ENCODE measurements at regions of chr1 and their contacts with region 1.

Region 1: GRCh38 chr1:11907275-11908094 is 18.7 kb downstream of the KIAA2013 start:
- DNase-seq: peak; percentile 80 to 96 (median 90)
- ATAC-seq: peak; percentile 45 to 77 (median 68)
- H3K4me3 ChIP-seq: peak overlapping the region in 1 of 2 donors; percentile 85
- H3K4me3 Mint-ChIP-seq: peak overlapping the region; percentile 89 to 96 (median 93)
- H3K27ac ChIP-seq: peak overlapping the region; percentile 97
- H3K27ac Mint-ChIP-seq: peak overlapping the region; percentile 100
- H3K4me1 ChIP-seq: peaks cover 6 to 35% of the 10 kb centered on the region in 2 experiments
- H3K4me1 Mint-ChIP-seq: peaks cover 26 to 57% (median 37%) of the 10 kb centered on the region in 3 donors
- H3K27me3 ChIP-seq: peaks cover 0 to 20% of the 10 kb centered on the region in 2 experiments
- H3K27me3 Mint-ChIP-seq: peaks cover 3 to 4% of the 10 kb centered on the region in 2 donors

Region 2: DNA sequence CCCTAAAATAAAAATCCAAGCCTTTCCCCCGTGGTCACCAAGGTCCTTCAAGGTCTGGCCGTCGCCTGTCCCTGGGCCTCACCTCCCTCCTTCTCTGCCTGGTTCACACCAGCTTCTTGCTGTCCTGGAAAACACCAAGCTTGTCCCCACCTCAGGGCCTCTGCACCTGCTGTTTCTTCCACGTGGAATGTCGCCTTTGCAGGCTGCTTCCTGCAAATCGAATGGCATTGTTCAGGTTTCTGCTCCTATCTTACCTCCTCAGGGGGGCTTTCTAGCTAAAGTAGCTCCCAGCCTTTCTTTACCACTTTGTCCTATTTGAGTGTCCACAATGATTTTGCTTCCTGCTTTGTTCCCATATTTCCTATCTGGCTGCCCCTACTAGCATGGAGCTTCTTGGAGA is 1107.8 kb before region 1 on chr1:
- CTCF ChIA-PET with region 1: no interaction called
- POLR2A ChIA-PET with region 1: interaction called in 1 of 2 experiments, 10 read pairs
- DNase-seq: no peak
- ATAC-seq: no peak
- H3K4me3 ChIP-seq: no peak overlapping the region
- H3K4me3 Mint-ChIP-seq: no peak overlapping the region
- H3K27ac ChIP-seq: no peak overlapping the region
- H3K27ac Mint-ChIP-seq: no peak overlapping the region
- H3K4me1 ChIP-seq: peaks cover 0 to 25% of the 10 kb centered on the region in 2 experiments
- H3K4me1 Mint-ChIP-seq: peaks cover 5 to 10% (median 7%) of the 10 kb centered on the region in 3 donors
- H3K27me3 ChIP-seq: peaks cover 4 to 64% of the 10 kb centered on the region in 2 experiments
- H3K27me3 Mint-ChIP-seq: peaks cover 50 to 53% of the 10 kb centered on the region in 2 donors

Region 3: GRCh38 chr1:11262171-11263049 is 645.1 kb before region 1 on chr1 and contains the start of gene MTOR:
- CTCF ChIA-PET with region 1: interaction called in 1 of 2 experiments, 10 read pairs
- POLR2A ChIA-PET with region 1: interaction called in 1 of 2 experiments, 3 read pairs
- DNase-seq: peak; percentile 90 to 99 (median 98)
- ATAC-seq: peak; percentile 97 to 99 (median 98)
- H3K4me3 ChIP-seq: peak within 1 kb of the TSS; percentile 88 to 95
- H3K4me3 Mint-ChIP-seq: peak within 1 kb of the TSS; percentile 86 to 95 (median 90)
- H3K27ac ChIP-seq: peak within 1 kb of the TSS; percentile 47
- H3K27ac Mint-ChIP-seq: peak within 1 kb of the TSS; percentile 88 to 91
- H3K4me1 ChIP-seq: peaks cover 8 to 24% of the 10 kb centered on the region in 2 experiments
- H3K4me1 Mint-ChIP-seq: peaks cover 14 to 28% (median 20%) of the 10 kb centered on the region in 3 donors
- H3K27me3 ChIP-seq: no peaks in the 10 kb centered on the region
- H3K27me3 Mint-ChIP-seq: no peaks in the 10 kb centered on the region
- total RNA-seq, gene MTOR: 41.7 to 45.1 (median 43.6) TPM

Region 4: DNA sequence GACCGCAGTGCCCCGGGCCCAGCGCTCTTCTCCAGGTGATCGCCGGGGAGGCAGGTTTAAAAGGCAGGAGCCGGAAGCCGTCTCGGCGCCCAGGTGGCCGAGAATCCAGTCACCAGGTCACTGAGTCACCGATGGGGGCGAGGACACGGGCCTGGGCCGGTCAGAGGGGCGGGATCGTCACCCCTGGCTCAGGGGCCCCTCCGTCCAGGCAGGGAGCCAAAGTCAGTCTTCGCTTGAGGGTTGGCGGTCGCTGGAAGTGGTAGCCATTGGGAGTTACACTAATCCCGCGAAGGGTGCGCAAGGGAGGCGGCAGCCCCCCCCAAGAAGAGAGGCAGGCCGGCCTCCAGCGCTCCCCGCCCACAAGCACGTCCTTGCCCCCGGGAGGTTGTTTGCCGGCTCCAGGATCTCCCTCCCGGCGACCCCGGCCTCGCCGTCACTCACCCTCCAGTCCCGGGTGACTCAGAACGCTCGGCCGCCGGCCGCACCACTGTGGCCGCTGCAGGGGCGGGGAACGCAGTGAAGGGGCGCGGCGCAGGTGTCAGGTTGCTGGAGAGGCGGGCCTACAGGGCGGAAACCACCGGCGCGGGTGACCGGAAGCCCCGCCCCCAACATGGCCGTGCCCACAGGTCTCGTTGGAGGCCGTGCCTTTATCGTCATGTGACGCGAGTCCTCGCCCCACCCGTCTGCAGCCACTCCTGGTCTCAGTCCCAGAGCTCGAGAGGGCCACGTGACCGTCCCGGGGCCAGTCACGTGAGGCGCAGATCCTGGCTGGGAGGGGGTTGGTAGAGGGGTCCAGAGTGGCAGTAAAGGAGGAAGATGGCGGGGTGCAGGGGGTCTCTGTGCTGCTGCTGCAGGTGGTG is 101.8 kb before region 1 on chr1 and contains the starts of genes CLCN6 and MTHFR:
- CTCF ChIA-PET with region 1: interaction called in 1 of 2 experiments, 4 read pairs
- POLR2A ChIA-PET with region 1: interaction called, 7 to 11 read pairs
- DNase-seq: peak; percentile 92 to 99 (median 97)
- ATAC-seq: peak; percentile 87 to 90 (median 87)
- H3K4me3 ChIP-seq: peak within 1 kb of the TSS; percentile 86 to 90
- H3K4me3 Mint-ChIP-seq: peak within 1 kb of the TSS; percentile 92 to 97 (median 93)
- H3K27ac ChIP-seq: peak within 1 kb of the TSS; percentile 84
- H3K27ac Mint-ChIP-seq: peak within 1 kb of the TSS; percentile 95 to 97
- H3K4me1 ChIP-seq: peaks cover 21 to 46% of the 10 kb centered on the region in 2 experiments
- H3K4me1 Mint-ChIP-seq: peaks cover 52 to 65% (median 61%) of the 10 kb centered on the region in 3 donors
- H3K27me3 ChIP-seq: no peaks in the 10 kb centered on the region
- H3K27me3 Mint-ChIP-seq: no peaks in the 10 kb centered on the region
- total RNA-seq, gene CLCN6: 17.3 to 23.0 (median 21.3) TPM
- total RNA-seq, gene MTHFR: 40.2 to 62.2 (median 48.2) TPM

Region 5: GRCh38 chr1:11929849-11930248 is 22.4 kb after region 1 on chr1:
- CTCF ChIA-PET with region 1: interaction called in 1 of 2 experiments, 3 read pairs
- POLR2A ChIA-PET with region 1: interaction called in 1 of 2 experiments, 12 read pairs
- DNase-seq: no peak
- ATAC-seq: no peak
- H3K4me3 ChIP-seq: no peak overlapping the region
- H3K4me3 Mint-ChIP-seq: no peak overlapping the region
- H3K27ac ChIP-seq: no peak overlapping the region
- H3K27ac Mint-ChIP-seq: no peak overlapping the region
- H3K4me1 ChIP-seq: peaks cover 5 to 23% of the 10 kb centered on the region in 2 experiments
- H3K4me1 Mint-ChIP-seq: peaks cover 4 to 12% (median 11%) of the 10 kb centered on the region in 3 donors
- H3K27me3 ChIP-seq: no peaks in the 10 kb centered on the region
- H3K27me3 Mint-ChIP-seq: no peaks in the 10 kb centered on the region

Region 6: GRCh38 chr1:11979851-11980675 is 72.6 kb after region 1 on chr1 and contains the start of gene MFN2:
- CTCF ChIA-PET with region 1: interaction called, 4 to 7 read pairs
- POLR2A ChIA-PET with region 1: interaction called, 4 to 14 read pairs
- DNase-seq: peak; percentile 83 to 94 (median 91)
- ATAC-seq: peak; percentile 92 to 95 (median 93)
- H3K4me3 ChIP-seq: peak within 1 kb of the TSS; percentile 82 to 89
- H3K4me3 Mint-ChIP-seq: peak within 1 kb of the TSS; percentile 83 to 93 (median 90)
- H3K27ac ChIP-seq: peak within 1 kb of the TSS; percentile 83
- H3K27ac Mint-ChIP-seq: peak within 1 kb of the TSS; percentile 87 to 91
- H3K4me1 ChIP-seq: peaks cover 9 to 29% of the 10 kb centered on the region in 2 experiments
- H3K4me1 Mint-ChIP-seq: peaks cover 41 to 46% (median 44%) of the 10 kb centered on the region in 3 donors
- H3K27me3 ChIP-seq: no peaks in the 10 kb centered on the region
- H3K27me3 Mint-ChIP-seq: no peaks in the 10 kb centered on the region
- total RNA-seq, gene MFN2: 38.0 to 47.0 (median 40.7) TPM

Region 7: GRCh38 chr1:12019858-12020509 is 112.5 kb after region 1 on chr1:
- CTCF ChIA-PET with region 1: interaction called in 1 of 2 experiments, 4 read pairs
- POLR2A ChIA-PET with region 1: interaction called in 1 of 2 experiments, 26 read pairs
- DNase-seq: peak in 4 of 35 experiments; percentile 6 to 21 (median 12)
- ATAC-seq: peak in 2 of 4 experiments; percentile 1 to 3
- H3K4me3 ChIP-seq: peak overlapping the region; percentile 75 to 92
- H3K4me3 Mint-ChIP-seq: peak overlapping the region; percentile 84 to 90 (median 85)
- H3K27ac ChIP-seq: peak overlapping the region; percentile 57
- H3K27ac Mint-ChIP-seq: peak overlapping the region; percentile 49 to 87
- H3K4me1 ChIP-seq: peaks cover 5 to 30% of the 10 kb centered on the region in 2 experiments
- H3K4me1 Mint-ChIP-seq: peaks cover 7 to 18% (median 13%) of the 10 kb centered on the region in 3 donors
- H3K27me3 ChIP-seq: no peaks in the 10 kb centered on the region
- H3K27me3 Mint-ChIP-seq: no peaks in the 10 kb centered on the region

Measured in T-cell (primary cell).